Heart left ventricle (tissue), 16 donors: ENCODE measurements at regions of chr13 and their contacts with region 1.

Region 1: GRCh38 chr13:20160847-20161274 is at the start of gene GJA3:
- DNase-seq: peak; percentile 69 to 78 (median 72)
- ATAC-seq: peak; percentile 68 to 92 (median 82)
- H3K4me3 ChIP-seq: peak within 1 kb of the TSS; percentile 45 to 72 (median 62)
- H3K27ac ChIP-seq: peak within 1 kb of the TSS in 11 of 12 donors; percentile 56 to 90 (median 78)
- H3K4me1 ChIP-seq: peaks cover 0 to 23% (median 8%) of the 10 kb centered on the region in 12 donors
- H3K27me3 ChIP-seq: peaks cover 8 to 85% (median 32%) of the 10 kb centered on the region in 9 donors
- CTCF ChIP-seq: peak in 4 of 12 donors; percentile 18 to 45 (median 28)
- POLR2A ChIP-seq: no peak
- total RNA-seq, gene GJA3: 13.6 to 30.5 (median 17.9) TPM

Region 2: GRCh38 chr13:19984430-19985218 is 176.2 kb before region 1 on chr13:
- intact Hi-C with region 1: loop called in 6 of 10 experiments (anchors 5 to 10 kb)
- DNase-seq: no peak
- ATAC-seq: peak in 2 of 4 donors; percentile 46 to 55
- H3K4me3 ChIP-seq: no peak overlapping the region
- H3K27ac ChIP-seq: no peak overlapping the region
- H3K4me1 ChIP-seq: peaks cover 0 to 29% (median 13%) of the 10 kb centered on the region in 12 donors
- H3K27me3 ChIP-seq: no peaks in the 10 kb centered on the region
- CTCF ChIP-seq: peak; percentile 24 to 69 (median 46)
- POLR2A ChIP-seq: no peak

Region 3: GRCh38 chr13:20049558-20050473 is 111.0 kb before region 1 on chr13:
- intact Hi-C with region 1: loop called in 5 of 10 experiments (anchors 5 to 10 kb)
- DNase-seq: no peak
- ATAC-seq: no peak
- H3K4me3 ChIP-seq: peak overlapping the region in 4 of 12 donors; percentile 10 to 29 (median 16)
- H3K27ac ChIP-seq: peak overlapping the region in 4 of 12 donors; percentile 11 to 78 (median 36)
- H3K4me1 ChIP-seq: peaks cover 0 to 26% (median 9%) of the 10 kb centered on the region in 12 donors
- H3K27me3 ChIP-seq: no peaks in the 10 kb centered on the region
- CTCF ChIP-seq: no peak
- POLR2A ChIP-seq: no peak

Region 4: GRCh38 chr13:20090349-20090748 is 70.5 kb before region 1 on chr13:
- intact Hi-C with region 1: loop called in 8 of 10 experiments (anchors 2 to 10 kb)
- DNase-seq: no peak
- ATAC-seq: peak in 1 of 4 donors; percentile 28
- H3K4me3 ChIP-seq: no peak overlapping the region
- H3K27ac ChIP-seq: no peak overlapping the region
- H3K4me1 ChIP-seq: peaks cover 0 to 6% (median 0%) of the 10 kb centered on the region in 12 donors
- H3K27me3 ChIP-seq: no peaks in the 10 kb centered on the region
- CTCF ChIP-seq: peak in 6 of 12 donors; percentile 10 to 36 (median 22)
- POLR2A ChIP-seq: no peak

Region 5: GRCh38 chr13:20141238-20142022 is 19.4 kb before region 1 on chr13:
- intact Hi-C with region 1: loop called in 1 of 10 experiments (anchors 2 kb)
- DNase-seq: peak; percentile 70 to 84 (median 74)
- ATAC-seq: peak; percentile 92 to 95 (median 94)
- H3K4me3 ChIP-seq: peak overlapping the region in 6 of 12 donors; percentile 2 to 23 (median 9)
- H3K27ac ChIP-seq: peak overlapping the region; percentile 34 to 89 (median 74)
- H3K4me1 ChIP-seq: peaks cover 5 to 51% (median 21%) of the 10 kb centered on the region in 12 donors
- H3K27me3 ChIP-seq: peaks cover 0 to 61% (median 12%) of the 10 kb centered on the region in 9 donors
- CTCF ChIP-seq: no peak
- POLR2A ChIP-seq: no peak